Gastrocnemius medialis (tissue), 4 donors: ENCODE measurements at regions of chr10 and their contacts with region 1.

Region 1: DNA sequence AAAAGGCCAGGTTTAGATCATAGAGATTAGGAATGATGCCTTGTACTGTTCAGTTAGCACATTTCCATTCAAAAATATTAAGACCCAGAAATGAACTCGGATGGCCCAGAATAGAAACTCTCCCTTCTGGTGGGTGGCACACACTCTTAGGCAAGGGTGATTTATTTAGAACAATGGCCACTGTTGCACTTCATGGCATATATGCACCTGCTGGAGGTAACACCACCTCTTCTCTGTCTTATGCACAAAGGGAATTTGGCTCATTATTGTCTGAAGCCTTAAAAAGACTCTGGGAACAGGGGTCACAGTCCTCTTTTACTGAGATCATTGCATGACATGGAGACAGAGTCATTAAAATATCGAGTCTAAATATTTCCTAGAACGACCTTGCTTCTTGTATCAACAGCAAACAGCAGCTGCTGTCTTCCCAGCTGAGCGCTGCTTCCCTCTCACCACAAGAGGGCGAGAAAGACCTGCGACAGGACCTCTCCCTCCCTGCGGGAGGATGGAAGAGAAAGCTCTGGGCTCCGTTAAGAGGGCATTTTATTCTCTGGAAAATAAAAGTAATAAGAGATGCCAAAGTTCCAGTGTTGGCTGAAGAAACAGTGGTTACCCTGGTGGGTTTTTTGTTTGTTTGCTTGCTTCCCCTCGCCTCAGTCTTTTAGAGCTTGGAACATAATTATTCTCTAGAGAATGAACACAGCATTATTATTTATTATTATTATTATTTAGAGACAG is 13.6 kb upstream of the BAMBI start:
- DNase-seq: peak; percentile 59 to 62
- ATAC-seq: peak; percentile 83 to 93
- H3K4me3 ChIP-seq: no peak overlapping the region
- H3K27ac ChIP-seq: no peak overlapping the region
- H3K4me1 ChIP-seq: peaks cover 4 to 7% of the 10 kb centered on the region in 2 donors
- H3K27me3 ChIP-seq: peaks cover 11 to 15% (median 14%) of the 10 kb centered on the region in 3 donors
- CTCF ChIP-seq: peak; percentile 85 to 96 (median 88)
- POLR2A ChIP-seq: no peak

Region 2: DNA sequence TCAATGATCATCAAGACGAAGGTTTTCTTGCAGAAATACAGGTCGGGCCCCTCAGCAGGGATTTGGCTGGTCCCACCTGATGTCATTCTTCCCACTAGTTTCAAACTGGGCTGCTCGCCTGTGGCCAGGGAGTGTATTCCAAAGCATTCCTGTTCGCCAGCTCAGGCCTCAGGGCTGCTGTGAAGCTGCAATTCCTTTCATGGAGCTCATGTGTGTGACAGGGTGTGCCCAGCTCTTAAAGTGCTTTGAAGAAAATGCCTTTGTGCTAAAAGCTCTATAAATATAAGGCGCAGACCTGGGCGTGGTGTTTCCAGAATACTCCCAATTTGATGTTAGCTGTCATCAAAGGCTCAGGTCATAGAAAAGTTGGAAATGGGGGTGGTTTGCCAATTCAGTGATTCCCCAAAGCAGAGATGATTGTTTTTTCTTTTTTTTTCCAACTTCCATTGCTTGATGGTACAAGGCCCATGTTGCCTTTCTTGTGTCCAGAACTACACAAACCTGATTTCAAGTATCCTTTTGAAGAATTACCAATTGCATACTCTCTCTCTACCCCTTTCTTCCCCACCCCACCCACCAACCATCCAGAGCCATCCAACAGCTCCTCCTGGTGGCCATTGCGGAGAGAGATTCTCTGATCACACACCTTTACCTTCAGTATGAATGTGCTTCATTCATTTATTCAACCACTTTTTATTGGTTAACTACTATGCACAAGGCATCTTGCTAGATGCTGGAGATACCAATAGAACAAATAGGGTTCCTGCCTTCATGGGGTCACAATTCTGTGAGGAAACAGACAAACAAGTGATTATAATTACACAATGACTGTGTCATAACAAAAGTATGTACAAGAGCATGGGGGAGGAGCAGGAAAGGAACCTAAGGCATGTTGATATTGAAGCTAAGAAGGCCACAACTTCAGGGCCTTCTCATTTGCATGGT is 327.9 kb after region 1 on chr10:
- in situ Hi-C with region 1: loop called (anchors 5 kb)
- intact Hi-C with region 1: loop called (anchors 1 kb)
- DNase-seq: no peak
- ATAC-seq: peak in 1 of 2 donors; percentile 51
- H3K4me3 ChIP-seq: no peak overlapping the region
- H3K27ac ChIP-seq: no peak overlapping the region
- H3K4me1 ChIP-seq: no peaks in the 10 kb centered on the region
- H3K27me3 ChIP-seq: no peaks in the 10 kb centered on the region
- CTCF ChIP-seq: peak; percentile 65 to 82 (median 74)
- POLR2A ChIP-seq: no peak

Region 3: DNA sequence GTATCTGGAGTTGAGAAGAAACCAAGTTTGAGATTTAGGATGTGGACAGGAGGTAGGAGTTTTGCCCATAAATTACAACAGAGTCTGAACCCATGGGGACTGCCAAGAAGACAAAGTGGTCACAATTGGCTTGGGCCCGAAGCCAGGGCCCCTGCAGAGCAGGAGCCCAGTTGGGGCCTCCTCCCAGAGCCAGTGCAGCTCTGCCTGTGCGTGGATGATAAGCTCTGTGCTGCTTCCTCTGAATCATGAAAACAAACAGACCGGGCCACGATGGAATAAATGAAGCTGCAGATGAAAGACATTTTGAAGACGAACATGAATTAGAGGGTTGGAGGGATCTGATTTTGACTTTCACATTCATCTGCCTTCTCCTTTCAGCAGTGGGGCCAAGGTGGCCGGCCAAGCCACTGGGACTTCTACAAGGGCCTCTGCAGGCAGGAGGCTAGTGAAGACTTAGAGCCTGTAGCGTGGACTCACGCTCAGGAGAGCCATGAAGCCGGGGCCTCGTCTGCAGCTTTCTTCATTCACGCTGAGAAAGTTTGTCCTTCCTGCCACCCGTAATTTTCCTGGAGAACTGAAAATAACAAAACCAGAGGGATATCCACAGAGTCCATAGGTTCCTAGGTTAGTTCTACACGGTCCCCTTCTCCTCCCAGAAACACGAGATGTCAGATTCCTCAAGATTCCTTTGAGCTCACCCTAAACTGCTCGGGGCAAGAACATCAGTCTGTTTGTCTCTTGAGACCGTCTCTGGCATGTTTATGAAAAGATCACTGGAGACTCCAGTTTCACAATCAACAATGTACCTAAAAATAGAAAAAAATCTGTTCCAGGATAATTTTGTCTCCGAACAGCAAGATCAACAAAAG is 468.4 kb after region 1 on chr10:
- in situ Hi-C with region 1: no loop called
- intact Hi-C with region 1: loop called (anchors 5 kb)
- DNase-seq: no peak
- ATAC-seq: peak in 1 of 2 donors; percentile 44
- H3K4me3 ChIP-seq: no peak overlapping the region
- H3K27ac ChIP-seq: peak overlapping the region in 2 of 4 donors; percentile 1 to 25
- H3K4me1 ChIP-seq: peaks cover 9 to 20% of the 10 kb centered on the region in 2 donors
- H3K27me3 ChIP-seq: no peaks in the 10 kb centered on the region
- CTCF ChIP-seq: no peak
- POLR2A ChIP-seq: no peak